ENCODE measurements at regions of chr3 and their contacts with region 1.

Region 1: DNA sequence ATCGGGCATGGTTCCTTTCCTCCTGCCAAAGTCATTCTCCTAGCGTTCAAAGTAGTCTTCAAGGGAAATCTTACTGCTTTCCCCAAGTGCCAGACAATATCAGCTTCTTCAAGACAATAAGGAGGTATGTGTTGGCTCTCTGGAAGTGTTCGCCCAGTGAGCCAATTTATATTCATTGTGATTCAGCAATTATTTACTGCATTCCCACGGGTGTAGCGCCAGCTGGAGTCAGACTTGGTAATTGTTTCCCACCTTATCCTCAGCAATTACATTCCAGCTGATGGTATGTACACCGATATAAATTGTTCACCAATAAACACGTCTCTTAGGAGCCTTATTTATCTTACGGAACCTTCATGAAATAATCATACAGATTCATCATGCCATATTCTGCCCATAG is 103.6 kb upstream of the CTNNB1 start:
- DNase-seq: no peak
- ATAC-seq: no peak
- H3K4me3 ChIP-seq: no peak overlapping the region
- H3K27ac ChIP-seq: no peak overlapping the region
- H3K4me1 ChIP-seq: peaks cover 0 to 10% (median 0%) of the 10 kb centered on the region in 9 donors
- H3K27me3 ChIP-seq: no peaks in the 10 kb centered on the region
- CTCF ChIP-seq: no peak

Region 2: GRCh38 chr3:41117398-41117870 is 21.7 kb after region 1 on chr3:
- intact Hi-C with region 1: loop called in 1 of 10 experiments (anchors 1 kb)
- DNase-seq: peak; percentile 88 to 90
- ATAC-seq: peak; percentile 89 to 96 (median 94)
- H3K4me3 ChIP-seq: peak overlapping the region in 2 of 10 donors; percentile 4 to 8
- H3K27ac ChIP-seq: peak overlapping the region in 8 of 10 donors; percentile 37 to 81 (median 58)
- H3K4me1 ChIP-seq: peaks cover 3 to 45% (median 28%) of the 10 kb centered on the region in 9 donors
- H3K27me3 ChIP-seq: no peaks in the 10 kb centered on the region
- CTCF ChIP-seq: peak in 1 of 9 donors; percentile 14

Region 3: GRCh38 chr3:41405466-41405865 is 309.8 kb after region 1 on chr3:
- intact Hi-C with region 1: no loop called
- DNase-seq: no peak
- ATAC-seq: no peak
- H3K4me3 ChIP-seq: no peak overlapping the region
- H3K27ac ChIP-seq: no peak overlapping the region
- H3K4me1 ChIP-seq: no peaks in the 10 kb centered on the region
- H3K27me3 ChIP-seq: no peaks in the 10 kb centered on the region
- CTCF ChIP-seq: no peak

Measured in heart right ventricle (tissue), 16 donors.